ENCODE measurements at regions of chr4 and their contacts with region 1.

Region 1: DNA sequence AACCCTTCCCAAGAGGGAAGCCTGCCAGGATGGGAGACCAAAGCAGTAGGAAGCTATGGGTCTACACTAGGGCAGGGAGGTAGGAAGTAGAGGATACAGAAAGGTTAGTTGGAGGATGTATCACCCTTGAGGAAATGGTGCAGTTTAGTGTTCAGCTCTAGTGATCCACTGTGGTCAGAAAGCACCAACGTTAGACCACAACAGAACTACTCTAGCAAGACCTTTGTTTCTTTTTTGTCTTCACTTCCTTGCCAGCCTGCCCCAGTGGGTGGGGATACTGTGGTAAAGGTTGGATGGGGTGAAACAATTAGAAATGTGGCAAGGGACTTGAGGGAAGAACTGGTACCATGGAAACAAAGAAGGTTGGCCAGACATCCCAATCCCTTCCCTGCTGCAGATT is 83.3 kb downstream of the DDIT4L start:
- DNase-seq: peak; percentile 72
- H3K4me3 ChIP-seq: peak overlapping the region; percentile 16
- H3K27ac ChIP-seq: no peak overlapping the region
- H3K4me1 ChIP-seq: peaks cover 23% of the 10 kb centered on the region
- CTCF ChIP-seq: no peak

Region 2: GRCh38 chr4:100165809-100166208 is 58.8 kb after region 1 on chr4:
- CTCF ChIA-PET with region 1: no interaction called
- POLR2A ChIA-PET with region 1: interaction called, 7 read pairs
- intact Hi-C with region 1: loop called (anchors 2 kb)
- DNase-seq: peak; percentile 37
- H3K4me3 ChIP-seq: peak overlapping the region; percentile 17
- H3K27ac ChIP-seq: peak overlapping the region; percentile 47
- H3K4me1 ChIP-seq: peaks cover 26% of the 10 kb centered on the region
- CTCF ChIP-seq: no peak